ENCODE measurements at regions of chr1 and their contacts with region 1.

Region 1: GRCh38 chr1:23273450-23274133 is 56.3 kb upstream of the HTR1D start:
- DNase-seq: no peak
- ATAC-seq: no peak
- H3K4me3 ChIP-seq: no peak overlapping the region
- H3K4me3 Mint-ChIP-seq: no peak overlapping the region
- H3K27ac ChIP-seq: no peak overlapping the region
- H3K27ac Mint-ChIP-seq: no peak overlapping the region
- H3K4me1 ChIP-seq: no peaks in the 10 kb centered on the region
- H3K4me1 Mint-ChIP-seq: no peaks in the 10 kb centered on the region
- H3K27me3 ChIP-seq: no peaks in the 10 kb centered on the region
- H3K27me3 Mint-ChIP-seq: peaks cover 15 to 45% (median 30%) of the 10 kb centered on the region in 5 donors

Region 2: GRCh38 chr1:22976461-22977243 is 296.9 kb before region 1 on chr1:
- CTCF ChIA-PET with region 1: no interaction called
- POLR2A ChIA-PET with region 1: no interaction called
- intact Hi-C with region 1: loop called in 1 of 2 experiments (anchors 10 kb)
- DNase-seq: peak in 8 of 9 donors; percentile 11 to 46 (median 38)
- ATAC-seq: peak; percentile 95
- H3K4me3 ChIP-seq: no peak overlapping the region
- H3K4me3 Mint-ChIP-seq: no peak overlapping the region
- H3K27ac ChIP-seq: no peak overlapping the region
- H3K27ac Mint-ChIP-seq: peak overlapping the region in 1 of 9 donors; percentile 72
- H3K4me1 ChIP-seq: no peaks in the 10 kb centered on the region
- H3K4me1 Mint-ChIP-seq: peaks cover 0 to 3% (median 0%) of the 10 kb centered on the region in 7 donors
- H3K27me3 ChIP-seq: no peaks in the 10 kb centered on the region
- H3K27me3 Mint-ChIP-seq: peaks cover 20 to 39% (median 22%) of the 10 kb centered on the region in 5 donors

Region 3: DNA sequence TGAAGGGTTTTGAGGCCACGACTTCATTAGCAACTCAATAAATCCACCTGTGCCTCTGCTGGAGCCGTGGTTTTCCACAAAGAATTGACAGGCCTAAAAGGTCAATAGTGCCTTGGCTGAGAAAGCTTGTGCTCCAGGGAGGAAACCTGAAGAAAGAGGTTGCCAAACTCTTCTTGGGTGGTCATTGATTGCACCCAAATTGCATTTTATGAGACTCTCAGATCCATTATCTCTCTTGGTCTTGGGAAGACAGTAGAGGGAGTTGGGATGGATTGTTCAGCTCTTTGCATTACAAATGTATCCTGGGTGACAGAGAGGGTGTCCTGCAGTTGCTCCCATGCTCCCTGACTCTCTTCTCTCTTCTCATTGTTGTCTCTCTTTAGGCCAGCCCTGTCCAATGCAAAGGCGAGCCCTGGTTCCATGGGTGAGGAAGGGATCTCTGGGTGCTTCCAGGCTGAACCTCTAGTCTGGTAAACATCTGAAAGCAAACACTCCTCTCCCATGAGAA is 10.2 kb before region 1 on chr1:
- CTCF ChIA-PET with region 1: no interaction called
- POLR2A ChIA-PET with region 1: interaction called, 13 read pairs
- intact Hi-C with region 1: no loop called
- DNase-seq: no peak
- ATAC-seq: no peak
- H3K4me3 ChIP-seq: no peak overlapping the region
- H3K4me3 Mint-ChIP-seq: no peak overlapping the region
- H3K27ac ChIP-seq: no peak overlapping the region
- H3K27ac Mint-ChIP-seq: no peak overlapping the region
- H3K4me1 ChIP-seq: no peaks in the 10 kb centered on the region
- H3K4me1 Mint-ChIP-seq: no peaks in the 10 kb centered on the region
- H3K27me3 ChIP-seq: no peaks in the 10 kb centered on the region
- H3K27me3 Mint-ChIP-seq: peaks cover 0 to 4% (median 3%) of the 10 kb centered on the region in 5 donors

Region 4: DNA sequence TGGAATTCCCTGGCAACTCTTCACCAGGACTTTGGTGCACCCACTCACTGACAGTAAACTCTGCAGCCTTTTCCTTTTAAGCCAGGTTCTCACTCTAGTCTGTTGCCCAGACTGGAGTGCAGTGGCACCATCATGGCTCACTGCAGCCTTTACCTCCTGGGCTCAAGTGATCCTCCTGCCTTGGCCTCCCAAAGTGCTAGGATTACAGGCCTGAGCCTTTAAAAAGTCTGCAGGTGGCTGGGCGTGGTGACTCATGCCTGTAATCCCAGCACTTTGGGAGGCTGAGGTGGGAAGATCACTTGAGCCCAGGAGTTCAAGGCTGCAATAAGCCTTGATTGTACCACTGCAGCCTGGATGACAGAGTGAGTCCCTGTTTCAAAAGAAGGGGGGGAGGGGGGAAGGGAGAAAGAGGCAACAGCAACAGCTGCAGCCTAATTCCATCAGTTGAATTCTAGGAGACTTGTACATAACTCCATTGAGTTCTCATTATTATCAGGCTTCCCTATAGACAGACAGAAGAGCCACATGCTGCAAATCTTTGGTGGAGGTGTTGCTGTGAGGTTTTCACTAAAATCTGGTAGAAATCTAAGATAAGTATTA is 78.6 kb after region 1 on chr1:
- CTCF ChIA-PET with region 1: no interaction called
- POLR2A ChIA-PET with region 1: no interaction called
- intact Hi-C with region 1: no loop called
- DNase-seq: no peak
- ATAC-seq: no peak
- H3K4me3 ChIP-seq: no peak overlapping the region
- H3K4me3 Mint-ChIP-seq: no peak overlapping the region
- H3K27ac ChIP-seq: no peak overlapping the region
- H3K27ac Mint-ChIP-seq: no peak overlapping the region
- H3K4me1 ChIP-seq: no peaks in the 10 kb centered on the region
- H3K4me1 Mint-ChIP-seq: peaks cover 4 to 14% (median 6%) of the 10 kb centered on the region in 7 donors
- H3K27me3 ChIP-seq: no peaks in the 10 kb centered on the region
- H3K27me3 Mint-ChIP-seq: no peaks in the 10 kb centered on the region

Region 5: DNA sequence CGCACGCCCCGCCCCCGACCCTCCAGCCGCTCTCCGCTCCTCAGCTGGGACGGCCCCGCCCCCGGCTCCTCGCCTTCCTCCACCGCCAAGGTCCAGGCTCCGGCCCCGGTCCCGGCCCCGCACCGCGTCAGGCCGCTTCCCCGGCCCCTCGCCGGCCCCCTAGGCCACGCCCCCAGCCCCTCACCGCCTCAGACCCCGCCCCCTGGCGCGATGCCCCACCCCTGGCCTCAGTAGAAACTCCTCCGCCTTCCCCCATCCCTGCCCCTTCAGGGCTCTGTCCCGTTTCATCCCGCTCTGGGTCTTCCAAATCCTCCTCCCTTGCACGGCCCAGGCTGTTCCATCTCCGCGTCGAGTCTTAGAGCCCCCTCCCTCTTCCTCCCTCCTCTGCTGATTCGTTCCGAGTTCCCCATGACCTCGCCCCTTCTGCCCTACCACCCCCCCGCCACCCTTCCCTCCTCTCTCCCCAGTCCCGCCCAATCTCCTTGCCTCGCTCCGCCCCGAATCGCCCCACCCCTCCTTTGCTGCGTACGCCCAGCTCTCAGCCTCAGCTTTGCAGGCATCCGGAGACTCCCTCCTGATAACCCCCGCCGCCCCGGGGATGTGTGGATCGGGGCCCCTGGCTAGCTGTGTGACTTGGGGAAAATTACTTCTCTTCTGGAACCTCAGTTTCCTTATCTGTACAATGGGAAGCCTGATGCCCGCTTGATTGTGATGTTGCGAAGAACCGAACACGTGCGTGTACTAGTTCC is 210.8 kb after region 1 on chr1:
- CTCF ChIA-PET with region 1: no interaction called
- POLR2A ChIA-PET with region 1: no interaction called
- intact Hi-C with region 1: no loop called
- DNase-seq: peak; percentile 76 to 92 (median 90)
- ATAC-seq: peak; percentile 94
- H3K4me3 ChIP-seq: peak overlapping the region; percentile 67
- H3K4me3 Mint-ChIP-seq: peak overlapping the region; percentile 74 to 97 (median 88)
- H3K27ac ChIP-seq: peak overlapping the region; percentile 63
- H3K27ac Mint-ChIP-seq: peak overlapping the region; percentile 65 to 83 (median 76)
- H3K4me1 ChIP-seq: peaks cover 13% of the 10 kb centered on the region in 2 donors
- H3K4me1 Mint-ChIP-seq: peaks cover 12 to 20% (median 15%) of the 10 kb centered on the region in 7 donors
- H3K27me3 ChIP-seq: no peaks in the 10 kb centered on the region
- H3K27me3 Mint-ChIP-seq: peaks cover 0 to 73% (median 13%) of the 10 kb centered on the region in 5 donors

Region 6: DNA sequence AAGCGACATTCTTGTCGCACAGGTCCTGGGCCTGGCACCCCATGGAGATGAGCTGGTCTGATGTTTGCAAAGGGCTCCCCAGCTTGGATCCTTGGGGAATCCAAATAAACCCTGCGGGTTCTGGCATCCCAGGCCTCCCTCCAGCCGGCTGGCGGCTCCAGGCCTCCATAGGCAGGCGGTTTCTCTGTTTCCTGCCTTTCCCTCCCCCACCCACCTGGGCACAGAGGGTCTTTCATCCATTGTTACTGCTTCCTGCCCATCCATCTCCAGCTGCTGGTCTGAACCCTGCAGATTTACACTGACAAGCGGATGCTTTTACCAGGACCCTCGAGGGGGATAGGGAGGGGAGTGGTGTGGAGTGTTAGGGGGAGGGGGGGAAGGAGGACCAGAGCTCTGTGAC is 324.8 kb after region 1 on chr1:
- CTCF ChIA-PET with region 1: no interaction called
- POLR2A ChIA-PET with region 1: no interaction called
- intact Hi-C with region 1: no loop called
- DNase-seq: no peak
- ATAC-seq: no peak
- H3K4me3 ChIP-seq: no peak overlapping the region
- H3K4me3 Mint-ChIP-seq: peak overlapping the region in 5 of 10 donors; percentile 6 to 88 (median 69)
- H3K27ac ChIP-seq: peak overlapping the region; percentile 40
- H3K27ac Mint-ChIP-seq: peak overlapping the region in 6 of 9 donors; percentile 3 to 84 (median 72)
- H3K4me1 ChIP-seq: peaks cover 73 to 92% of the 10 kb centered on the region in 2 donors
- H3K4me1 Mint-ChIP-seq: peaks cover 50 to 97% (median 85%) of the 10 kb centered on the region in 7 donors
- H3K27me3 ChIP-seq: no peaks in the 10 kb centered on the region
- H3K27me3 Mint-ChIP-seq: no peaks in the 10 kb centered on the region

Region 7: DNA sequence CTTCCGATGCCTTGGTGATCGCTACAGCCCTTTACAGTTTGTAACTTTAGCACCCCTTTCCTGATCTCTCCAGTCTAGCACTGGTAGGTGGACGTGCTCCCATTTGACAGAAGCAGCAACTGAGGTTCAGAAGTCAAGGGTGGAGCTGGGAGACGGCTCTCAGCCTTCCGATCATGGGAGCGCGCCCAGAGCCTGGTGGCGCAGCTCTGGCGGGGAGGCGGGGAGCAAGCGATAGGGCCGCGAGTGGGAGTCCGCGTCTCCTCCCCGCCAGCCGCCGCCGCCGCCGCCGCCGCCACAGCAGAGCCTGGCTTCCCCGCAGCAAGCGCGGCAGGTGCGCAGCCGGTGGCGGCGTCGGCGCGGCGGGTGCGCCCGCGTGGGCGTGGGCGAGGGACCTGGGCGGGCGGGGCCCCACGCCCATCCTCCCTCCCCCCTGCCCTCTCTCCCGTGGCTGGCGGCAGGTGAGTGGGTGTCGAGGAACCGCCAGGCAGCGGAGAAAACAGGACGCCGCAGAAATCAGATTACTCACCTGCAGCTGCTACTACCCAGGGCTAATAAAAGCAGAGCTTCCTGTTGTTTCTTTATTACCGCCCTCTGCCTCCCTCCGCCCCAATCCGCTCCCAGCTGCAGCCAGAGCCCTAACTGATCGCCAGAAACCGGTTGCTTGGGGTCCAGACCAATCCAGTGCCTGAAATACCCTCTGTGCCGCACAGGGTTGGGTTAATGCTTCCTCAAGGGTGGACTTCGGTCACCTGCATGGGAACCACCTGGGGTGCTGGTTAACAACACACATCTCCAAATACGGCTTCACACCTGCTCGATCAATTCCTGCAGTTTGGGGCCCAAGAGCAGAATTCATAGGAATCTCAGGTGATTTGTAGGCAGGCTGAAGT is 346.0 kb after region 1 on chr1:
- CTCF ChIA-PET with region 1: no interaction called
- POLR2A ChIA-PET with region 1: no interaction called
- intact Hi-C with region 1: no loop called
- DNase-seq: peak; percentile 58 to 88 (median 84)
- ATAC-seq: peak; percentile 93
- H3K4me3 ChIP-seq: peak overlapping the region; percentile 65
- H3K4me3 Mint-ChIP-seq: peak overlapping the region; percentile 63 to 85 (median 78)
- H3K27ac ChIP-seq: peak overlapping the region; percentile 81
- H3K27ac Mint-ChIP-seq: peak overlapping the region; percentile 84 to 99 (median 97)
- H3K4me1 ChIP-seq: peaks cover 45 to 79% of the 10 kb centered on the region in 2 donors
- H3K4me1 Mint-ChIP-seq: peaks cover 68 to 97% (median 90%) of the 10 kb centered on the region in 7 donors
- H3K27me3 ChIP-seq: no peaks in the 10 kb centered on the region
- H3K27me3 Mint-ChIP-seq: peaks cover 0 to 11% (median 0%) of the 10 kb centered on the region in 5 donors